Testis (tissue), 5 donors: ENCODE measurements at regions of chr1 and their contacts with region 1.

Region 1: DNA sequence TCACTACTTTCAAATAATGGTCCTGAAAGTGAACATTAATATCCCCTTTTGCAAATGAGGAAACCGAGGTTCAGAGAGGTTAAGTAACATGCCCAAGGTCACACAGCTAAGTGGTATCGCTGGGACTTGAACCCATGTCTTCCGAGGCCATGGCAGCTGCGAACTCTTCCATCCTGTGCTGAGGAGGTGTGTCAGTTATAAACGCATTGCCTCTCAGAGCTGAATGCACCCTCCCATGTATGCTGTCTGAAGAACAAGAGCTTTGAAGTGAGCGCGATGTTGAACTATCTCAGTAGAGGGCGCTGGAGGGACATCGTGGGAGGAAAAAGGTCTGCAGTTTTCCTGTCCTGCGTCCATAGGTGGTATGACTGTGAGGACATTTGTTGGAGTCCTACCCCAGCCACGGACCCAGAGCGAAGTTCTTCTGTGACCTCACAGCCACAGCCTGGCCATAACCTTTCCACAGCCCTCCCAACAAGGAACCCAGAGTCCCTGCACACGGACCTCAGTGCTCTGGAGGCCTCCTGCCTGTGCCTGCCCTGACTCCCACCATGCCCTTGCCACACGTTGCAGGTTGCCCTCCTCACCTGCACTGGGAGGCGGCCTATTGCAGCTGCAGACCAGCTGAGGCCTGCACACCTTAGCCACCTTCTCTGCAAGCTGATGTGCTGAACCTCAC is 7.5 kb downstream of the MYOC start:
- DNase-seq: peak; percentile 91
- H3K4me3 ChIP-seq: no peak overlapping the region
- H3K27ac ChIP-seq: peak overlapping the region; percentile 46 to 62
- H3K4me1 ChIP-seq: peaks cover 20% of the 10 kb centered on the region
- H3K27me3 ChIP-seq: no peaks in the 10 kb centered on the region
- CTCF ChIP-seq: peak; percentile 64 to 78 (median 73)
- POLR2A ChIP-seq: no peak

Region 2: GRCh38 chr1:171344473-171344820 is 300.5 kb before region 1 on chr1:
- intact Hi-C with region 1: no loop called
- DNase-seq: no peak
- H3K4me3 ChIP-seq: no peak overlapping the region
- H3K27ac ChIP-seq: no peak overlapping the region
- H3K4me1 ChIP-seq: no peaks in the 10 kb centered on the region
- H3K27me3 ChIP-seq: no peaks in the 10 kb centered on the region
- CTCF ChIP-seq: no peak
- POLR2A ChIP-seq: no peak

Region 3: GRCh38 chr1:171715813-171716251 is 70.9 kb after region 1 on chr1:
- intact Hi-C with region 1: loop called (anchors 10 kb)
- DNase-seq: no peak
- H3K4me3 ChIP-seq: no peak overlapping the region
- H3K27ac ChIP-seq: peak overlapping the region in 1 of 2 donors; percentile 8
- H3K4me1 ChIP-seq: peaks cover 7% of the 10 kb centered on the region
- H3K27me3 ChIP-seq: no peaks in the 10 kb centered on the region
- CTCF ChIP-seq: peak in 2 of 3 experiments; percentile 26 to 55
- POLR2A ChIP-seq: no peak